Activated naive CD4-positive, alpha-beta T cell treated with anti-CD3 and anti-CD28 coated beads for 36 hours (primary cell): ENCODE measurements at regions of chr6 and their contacts with region 1.

Region 1: GRCh38 chr6:100105138-100105753 is 111.2 kb upstream of the MCHR2 start:
- DNase-seq: no peak
- H3K4me3 Mint-ChIP-seq: no peak overlapping the region
- H3K27ac Mint-ChIP-seq: no peak overlapping the region
- H3K4me1 Mint-ChIP-seq: no peaks in the 10 kb centered on the region
- H3K27me3 Mint-ChIP-seq: peaks cover 7% of the 10 kb centered on the region

Region 2: GRCh38 chr6:100001915-100002388 is 103.3 kb before region 1 on chr6:
- CTCF ChIA-PET with region 1: interaction called, 46 read pairs
- intact Hi-C with region 1: no loop called
- DNase-seq: peak; percentile 51
- H3K4me3 Mint-ChIP-seq: no peak overlapping the region
- H3K27ac Mint-ChIP-seq: no peak overlapping the region
- H3K4me1 Mint-ChIP-seq: no peaks in the 10 kb centered on the region
- H3K27me3 Mint-ChIP-seq: peaks cover 18% of the 10 kb centered on the region

Region 3: GRCh38 chr6:100657678-100658330 is 552.6 kb after region 1 on chr6:
- CTCF ChIA-PET with region 1: no interaction called
- intact Hi-C with region 1: loop called (anchors 2 kb)
- DNase-seq: no peak
- H3K4me3 Mint-ChIP-seq: no peak overlapping the region
- H3K27ac Mint-ChIP-seq: no peak overlapping the region
- H3K4me1 Mint-ChIP-seq: no peaks in the 10 kb centered on the region
- H3K27me3 Mint-ChIP-seq: no peaks in the 10 kb centered on the region

Region 4: GRCh38 chr6:101722991-101723579 is 1617.8 kb after region 1 on chr6:
- CTCF ChIA-PET with region 1: no interaction called
- intact Hi-C with region 1: no loop called
- DNase-seq: no peak
- H3K4me3 Mint-ChIP-seq: no peak overlapping the region
- H3K27ac Mint-ChIP-seq: no peak overlapping the region
- H3K4me1 Mint-ChIP-seq: no peaks in the 10 kb centered on the region
- H3K27me3 Mint-ChIP-seq: no peaks in the 10 kb centered on the region